CD8-positive, alpha-beta memory T cell (primary cell): ENCODE measurements at regions of chr7 and their contacts with region 1.

Region 1: DNA sequence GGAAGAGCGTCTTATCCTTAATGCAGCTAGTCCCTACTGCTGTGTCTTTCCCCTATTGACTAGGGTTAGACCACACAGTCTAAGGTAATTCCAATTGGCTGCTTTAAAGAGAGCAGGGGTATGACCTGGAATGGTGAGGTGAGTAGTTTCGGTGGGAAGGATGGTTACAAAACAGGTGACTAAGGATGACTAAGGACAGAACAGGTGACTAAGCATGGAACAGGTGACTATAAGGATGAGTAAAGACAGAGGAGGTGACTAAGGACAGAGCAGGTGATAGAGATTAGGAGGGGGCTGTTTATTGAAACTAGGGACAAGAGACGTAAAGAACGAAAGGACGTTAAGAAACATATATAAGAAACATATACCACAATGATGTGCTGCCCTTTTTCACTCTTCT is 145.1 kb upstream of the TMEM106B start:
- DNase-seq: no peak
- H3K4me3 ChIP-seq: no peak overlapping the region
- H3K4me3 Mint-ChIP-seq: no peak overlapping the region
- H3K27ac ChIP-seq: no peak overlapping the region
- H3K27ac Mint-ChIP-seq: no peak overlapping the region
- H3K4me1 ChIP-seq: no peaks in the 10 kb centered on the region
- H3K4me1 Mint-ChIP-seq: peaks cover 0 to 3% (median 0%) of the 10 kb centered on the region in 3 donors
- H3K27me3 ChIP-seq: no peaks in the 10 kb centered on the region
- H3K27me3 Mint-ChIP-seq: no peaks in the 10 kb centered on the region

Region 2: GRCh38 chr7:12322284-12322902 is 256.4 kb after region 1 on chr7:
- CTCF ChIA-PET with region 1: interaction called, 11 read pairs
- POLR2A ChIA-PET with region 1: no interaction called
- DNase-seq: peak in 2 of 5 donors; percentile 36 to 38
- H3K4me3 ChIP-seq: no peak overlapping the region
- H3K4me3 Mint-ChIP-seq: no peak overlapping the region
- H3K27ac ChIP-seq: no peak overlapping the region
- H3K27ac Mint-ChIP-seq: no peak overlapping the region
- H3K4me1 ChIP-seq: no peaks in the 10 kb centered on the region
- H3K4me1 Mint-ChIP-seq: no peaks in the 10 kb centered on the region
- H3K27me3 ChIP-seq: no peaks in the 10 kb centered on the region
- H3K27me3 Mint-ChIP-seq: peaks cover 3 to 4% of the 10 kb centered on the region in 2 donors